Gastrocnemius medialis (tissue), 4 donors: ENCODE measurements at regions of chr9 and their contacts with region 1.

Region 1: DNA sequence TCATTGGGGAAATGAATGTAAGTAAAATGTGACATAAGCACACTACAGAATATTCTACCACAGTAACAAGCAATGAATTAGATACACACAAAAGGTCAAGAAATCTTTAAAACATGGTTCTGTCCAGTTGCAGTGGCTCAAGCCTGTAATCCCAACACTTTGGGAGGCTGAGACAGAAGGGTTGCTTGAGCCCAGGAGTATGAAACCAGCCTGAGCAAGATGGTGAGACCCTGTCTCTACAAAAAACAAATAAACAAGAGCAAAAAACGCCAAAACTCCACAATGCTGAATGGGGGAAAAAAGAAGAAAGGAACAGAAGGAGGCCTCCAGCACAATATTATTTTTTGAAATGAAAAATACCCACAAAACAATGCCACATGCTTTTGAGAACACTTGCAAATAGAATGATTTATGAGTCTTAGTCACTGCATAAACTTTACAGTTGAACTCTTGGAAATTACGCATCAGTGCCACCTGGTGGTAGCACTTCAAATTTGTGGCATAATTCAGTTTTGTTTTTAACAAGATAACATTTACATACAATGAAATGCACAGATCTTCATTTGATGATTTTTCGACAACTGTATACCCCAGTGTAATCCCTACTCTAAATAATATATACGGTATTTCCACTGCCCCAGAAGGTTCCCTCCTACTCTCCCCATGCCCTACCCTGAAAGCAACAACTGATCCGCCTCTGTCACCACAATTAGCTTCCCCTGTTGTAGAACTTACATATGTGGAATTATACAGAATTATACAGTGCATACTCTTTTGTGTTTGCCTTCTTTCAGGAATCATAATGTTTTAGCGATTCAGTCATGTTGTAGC is 14.4 kb upstream of the SPINK4 start:
- DNase-seq: peak; percentile 23 to 50
- ATAC-seq: peak; percentile 77 to 82
- H3K4me3 ChIP-seq: no peak overlapping the region
- H3K27ac ChIP-seq: no peak overlapping the region
- H3K4me1 ChIP-seq: peaks cover 4 to 7% of the 10 kb centered on the region in 2 donors
- H3K27me3 ChIP-seq: no peaks in the 10 kb centered on the region
- CTCF ChIP-seq: peak; percentile 79 to 88 (median 82)
- POLR2A ChIP-seq: no peak

Region 2: GRCh38 chr9:33081128-33081851 is 144.2 kb before region 1 on chr9:
- in situ Hi-C with region 1: loop called (anchors 5 kb)
- intact Hi-C with region 1: loop called (anchors 1 kb)
- DNase-seq: peak; percentile 31 to 42
- ATAC-seq: peak; percentile 80 to 88
- H3K4me3 ChIP-seq: peak overlapping the region in 1 of 4 donors; percentile 14
- H3K27ac ChIP-seq: peak overlapping the region in 3 of 4 donors; percentile 30 to 52 (median 39)
- H3K4me1 ChIP-seq: peaks cover 5 to 9% of the 10 kb centered on the region in 2 donors
- H3K27me3 ChIP-seq: no peaks in the 10 kb centered on the region
- CTCF ChIP-seq: peak; percentile 80 to 86 (median 84)
- POLR2A ChIP-seq: no peak

Region 3: DNA sequence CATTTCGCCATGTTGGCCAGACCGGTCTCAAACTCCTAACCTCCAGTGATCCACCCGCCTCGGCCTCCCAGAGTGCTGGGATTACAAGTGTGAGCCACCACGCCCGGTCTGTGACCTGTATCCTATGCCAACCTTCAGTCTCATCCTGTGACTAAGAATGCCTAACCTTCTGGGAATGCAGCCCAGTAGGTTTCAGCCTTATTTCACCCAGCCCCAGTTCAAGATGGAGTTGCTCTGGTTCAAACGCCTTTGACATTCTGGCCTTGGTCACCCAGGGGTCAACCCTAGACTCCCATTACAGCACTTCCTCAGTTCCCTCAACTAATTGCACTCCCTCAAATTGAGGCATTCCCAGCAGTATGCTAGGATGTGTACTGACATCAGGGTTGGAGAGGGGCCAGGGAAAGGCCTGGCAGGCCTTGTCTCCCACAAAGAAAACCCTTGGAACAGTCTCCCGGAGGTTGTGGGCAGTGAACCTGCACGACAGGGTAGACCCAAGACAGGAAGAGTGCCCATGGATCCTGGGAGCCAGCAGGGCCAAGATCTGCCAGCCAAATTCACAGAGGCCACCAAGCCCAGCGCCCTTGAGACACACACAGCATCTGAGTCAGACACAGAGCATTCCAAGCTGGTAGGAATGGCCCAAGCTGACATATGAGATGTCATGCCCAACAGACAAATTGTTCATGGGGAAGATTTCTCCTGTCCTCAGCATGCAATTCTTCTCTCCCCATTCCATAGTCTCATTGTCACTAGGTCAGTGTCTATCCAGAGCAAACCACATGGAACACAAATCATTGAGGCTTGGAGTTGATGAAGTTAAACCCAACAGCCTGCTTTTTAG is 124.2 kb before region 1 on chr9:
- in situ Hi-C with region 1: no loop called
- intact Hi-C with region 1: loop called (anchors 5 kb)
- DNase-seq: peak; percentile 66 to 88
- ATAC-seq: peak; percentile 97
- H3K4me3 ChIP-seq: no peak overlapping the region
- H3K27ac ChIP-seq: peak overlapping the region; percentile 80 to 88 (median 85)
- H3K4me1 ChIP-seq: peaks cover 14 to 19% of the 10 kb centered on the region in 2 donors
- H3K27me3 ChIP-seq: no peaks in the 10 kb centered on the region
- CTCF ChIP-seq: no peak
- POLR2A ChIP-seq: no peak

Region 4: DNA sequence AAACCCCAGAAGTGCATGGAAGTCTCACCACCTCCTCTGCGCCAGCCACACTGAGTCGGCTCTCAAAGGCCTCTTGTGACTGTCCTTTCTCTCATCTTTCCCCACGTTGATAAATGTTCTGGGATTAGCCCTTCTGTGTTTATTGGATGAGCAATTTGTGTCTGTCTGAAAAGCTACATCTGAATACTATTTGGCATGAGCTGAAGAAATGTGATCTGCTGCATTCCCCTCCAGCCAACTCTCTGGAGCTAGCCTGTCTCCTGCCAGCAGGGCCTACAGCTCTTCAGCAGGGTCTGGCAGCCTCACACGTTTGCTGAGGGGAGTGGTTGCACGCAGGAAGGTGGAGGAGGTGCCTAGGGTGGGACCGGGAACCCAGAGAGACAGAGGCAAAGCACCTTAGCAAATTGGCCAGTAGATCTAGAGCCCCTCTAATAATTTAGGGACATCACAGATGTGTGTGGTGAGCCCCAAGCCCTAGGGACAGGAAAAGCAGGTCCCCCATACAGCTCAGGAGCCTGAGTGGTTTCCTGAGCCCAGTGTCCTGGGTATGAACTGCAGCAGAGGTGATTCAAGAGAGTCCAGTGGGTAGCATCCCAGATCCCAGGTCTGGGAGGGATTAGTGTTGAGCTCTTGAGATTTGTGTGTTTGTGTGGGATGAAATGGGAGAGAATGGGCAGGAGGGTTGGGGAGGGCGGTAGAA is 37.9 kb before region 1 on chr9:
- in situ Hi-C with region 1: no loop called
- intact Hi-C with region 1: loop called (anchors 5 kb)
- DNase-seq: peak; percentile 51 to 75
- ATAC-seq: peak; percentile 95
- H3K4me3 ChIP-seq: no peak overlapping the region
- H3K27ac ChIP-seq: peak overlapping the region; percentile 66 to 76 (median 70)
- H3K4me1 ChIP-seq: peaks cover 31 to 34% of the 10 kb centered on the region in 2 donors
- H3K27me3 ChIP-seq: no peaks in the 10 kb centered on the region
- CTCF ChIP-seq: no peak
- POLR2A ChIP-seq: no peak

Region 5: GRCh38 chr9:33272061-33272460 is 46.5 kb after region 1 on chr9:
- in situ Hi-C with region 1: no loop called
- intact Hi-C with region 1: no loop called
- DNase-seq: no peak
- ATAC-seq: no peak
- H3K4me3 ChIP-seq: no peak overlapping the region
- H3K27ac ChIP-seq: no peak overlapping the region
- H3K4me1 ChIP-seq: peaks cover 0 to 2% of the 10 kb centered on the region in 2 donors
- H3K27me3 ChIP-seq: no peaks in the 10 kb centered on the region
- CTCF ChIP-seq: no peak
- POLR2A ChIP-seq: no peak

Region 6: GRCh38 chr9:33388110-33388994 is 162.8 kb after region 1 on chr9:
- in situ Hi-C with region 1: no loop called
- intact Hi-C with region 1: no loop called
- DNase-seq: peak in 1 of 2 donors; percentile 37
- ATAC-seq: no peak
- H3K4me3 ChIP-seq: no peak overlapping the region
- H3K27ac ChIP-seq: peak overlapping the region; percentile 48 to 89 (median 70)
- H3K4me1 ChIP-seq: peaks cover 16 to 31% of the 10 kb centered on the region in 2 donors
- H3K27me3 ChIP-seq: no peaks in the 10 kb centered on the region
- CTCF ChIP-seq: no peak
- POLR2A ChIP-seq: no peak